ENCODE measurements at regions of chr1 and their contacts with region 1.

Region 1: GRCh38 chr1:180515864-180516388 is 13.5 kb upstream of the ACBD6 start:
- DNase-seq: peak; percentile 68
- ATAC-seq: peak; percentile 98
- H3K4me3 Mint-ChIP-seq: no peak overlapping the region
- H3K27ac Mint-ChIP-seq: no peak overlapping the region
- H3K4me1 Mint-ChIP-seq: peaks cover 5% of the 10 kb centered on the region
- H3K27me3 Mint-ChIP-seq: peaks cover 8% of the 10 kb centered on the region

Region 2: GRCh38 chr1:180502360-180503273 is 13.3 kb before region 1 on chr1 and contains the start of gene ACBD6:
- CTCF ChIA-PET with region 1: interaction called, 26 read pairs
- DNase-seq: peak; percentile 90
- ATAC-seq: peak; percentile 90
- H3K4me3 Mint-ChIP-seq: peak within 1 kb of the TSS; percentile 99
- H3K27ac Mint-ChIP-seq: peak within 1 kb of the TSS; percentile 97
- H3K4me1 Mint-ChIP-seq: peaks cover 33% of the 10 kb centered on the region
- H3K27me3 Mint-ChIP-seq: no peaks in the 10 kb centered on the region
- total RNA-seq, gene ACBD6: 39.8 to 41.3 TPM

Region 3: DNA sequence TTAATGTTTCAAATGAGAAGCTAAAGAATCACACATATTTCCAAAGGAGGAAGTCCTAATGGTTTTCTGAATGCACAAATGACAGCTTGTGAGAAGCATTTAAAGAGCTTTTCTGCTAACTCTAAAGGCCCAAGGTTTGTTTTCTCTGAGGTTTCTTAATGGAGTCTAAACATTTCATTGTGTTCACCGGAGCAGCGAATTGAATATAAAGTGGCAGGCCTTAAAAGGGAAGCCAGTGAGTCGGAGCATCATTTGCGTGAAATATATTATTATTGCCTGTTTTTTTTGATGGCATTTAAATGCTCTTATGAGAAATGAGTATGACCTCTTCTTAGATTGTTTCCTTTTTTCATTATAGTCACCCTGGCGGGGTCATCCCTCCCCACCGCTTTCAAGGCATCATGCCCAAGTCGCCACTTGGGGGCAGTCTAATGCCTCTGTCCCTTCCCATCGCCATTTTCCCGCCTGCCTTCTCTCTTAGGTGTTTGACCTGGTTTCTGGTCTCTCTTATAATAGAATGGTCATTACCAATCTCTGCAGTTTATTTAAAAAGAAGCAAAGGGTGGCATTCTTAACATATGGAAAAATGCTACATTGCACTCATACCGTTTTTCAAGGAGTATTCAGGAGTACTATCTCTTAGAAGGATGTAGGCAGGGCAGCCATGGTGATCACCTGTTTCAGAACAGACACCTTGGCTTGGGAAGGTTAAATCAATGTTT is 17.5 kb after region 1 on chr1:
- CTCF ChIA-PET with region 1: interaction called, 13 read pairs
- DNase-seq: peak; percentile 78
- ATAC-seq: peak; percentile 70
- H3K4me3 Mint-ChIP-seq: no peak overlapping the region
- H3K27ac Mint-ChIP-seq: no peak overlapping the region
- H3K4me1 Mint-ChIP-seq: no peaks in the 10 kb centered on the region
- H3K27me3 Mint-ChIP-seq: peaks cover 30% of the 10 kb centered on the region

Measured in activated CD8-positive, alpha-beta memory T cell treated with anti-CD3 and anti-CD28 coated beads, Interleukin-2, amount 10 ng/mL, durations not matched to agents 7 days and 5 days (primary cell).